ENCODE measurements at regions of chr1 and their contacts with region 1.

Region 1: GRCh38 chr1:111399792-111400610 is 27.5 kb downstream of the OVGP1 start:
- H3K4me3 ChIP-seq: no peak overlapping the region
- H3K27ac ChIP-seq: no peak overlapping the region
- H3K4me1 ChIP-seq: no peaks in the 10 kb centered on the region
- CTCF ChIP-seq: no peak

Region 2: DNA sequence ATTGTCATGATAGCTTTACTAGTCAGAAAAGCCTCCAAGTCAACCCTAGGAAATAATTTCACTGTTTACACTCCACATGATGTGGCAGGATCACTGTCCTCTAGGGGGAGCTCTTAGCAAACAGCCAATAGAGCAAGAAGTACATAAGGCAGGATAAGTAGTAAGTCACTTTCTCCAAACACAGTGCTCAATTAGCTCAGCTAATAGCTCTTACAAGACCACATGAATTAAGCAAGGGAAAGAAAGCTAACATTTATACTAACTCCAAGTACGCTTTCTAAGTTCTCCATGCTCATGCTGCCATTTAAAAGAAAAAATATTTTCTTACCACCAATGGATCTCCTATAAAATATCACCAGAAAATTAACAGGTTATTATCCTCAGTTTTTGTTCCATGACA is 369.4 kb before region 1 on chr1:
- CTCF ChIA-PET with region 1: interaction called, 10 read pairs
- POLR2A ChIA-PET with region 1: no interaction called
- H3K4me3 ChIP-seq: no peak overlapping the region
- H3K27ac ChIP-seq: no peak overlapping the region
- H3K4me1 ChIP-seq: no peaks in the 10 kb centered on the region
- CTCF ChIP-seq: no peak

Region 3: DNA sequence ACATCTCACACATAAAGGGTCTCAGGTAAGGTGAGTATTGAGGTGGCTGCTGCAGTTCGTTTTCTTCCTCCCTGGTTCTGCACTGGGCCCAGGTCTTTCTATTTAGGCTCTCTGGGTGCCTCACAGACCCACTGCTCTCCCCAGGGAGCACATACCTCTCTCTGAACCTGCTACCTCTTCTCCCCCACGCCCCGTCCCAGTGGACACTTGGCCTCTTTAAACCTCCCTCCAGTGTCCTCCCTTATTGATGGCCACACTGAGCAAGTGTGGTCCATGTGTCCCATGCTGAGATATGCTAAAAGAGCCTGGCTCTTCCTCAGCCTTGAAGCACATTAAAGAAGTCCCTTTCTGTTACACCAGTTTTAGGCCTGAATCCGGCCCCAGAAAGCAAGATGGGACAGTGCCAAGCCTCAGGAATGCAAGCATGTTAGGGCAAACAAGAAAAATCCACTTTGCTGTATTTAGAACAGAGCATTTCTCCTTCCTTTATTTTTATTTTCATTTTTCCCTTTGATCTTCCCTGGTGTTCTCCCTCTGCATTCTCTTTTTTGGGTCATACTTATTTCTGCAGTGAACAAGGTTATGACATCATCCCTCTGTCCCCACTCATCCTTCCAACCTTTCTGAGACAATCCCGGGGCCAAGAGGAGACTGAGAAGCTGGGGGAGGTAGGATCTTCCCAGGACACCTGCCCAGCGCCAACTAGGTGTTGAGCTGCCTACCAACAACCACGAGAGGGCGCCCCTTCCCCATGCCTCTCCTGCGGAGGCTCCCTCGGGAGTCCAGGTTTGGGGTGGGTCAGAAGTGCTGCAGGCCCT is 177.5 kb before region 1 on chr1:
- CTCF ChIA-PET with region 1: interaction called, 115 read pairs
- POLR2A ChIA-PET with region 1: no interaction called
- H3K4me3 ChIP-seq: no peak overlapping the region
- H3K27ac ChIP-seq: no peak overlapping the region
- H3K4me1 ChIP-seq: no peaks in the 10 kb centered on the region
- CTCF ChIP-seq: peak; percentile 81

Region 4: GRCh38 chr1:111381457-111381856 is 18.5 kb before region 1 on chr1:
- CTCF ChIA-PET with region 1: interaction called, 16 read pairs
- POLR2A ChIA-PET with region 1: no interaction called
- H3K4me3 ChIP-seq: no peak overlapping the region
- H3K27ac ChIP-seq: no peak overlapping the region
- H3K4me1 ChIP-seq: no peaks in the 10 kb centered on the region
- CTCF ChIP-seq: no peak

Region 5: DNA sequence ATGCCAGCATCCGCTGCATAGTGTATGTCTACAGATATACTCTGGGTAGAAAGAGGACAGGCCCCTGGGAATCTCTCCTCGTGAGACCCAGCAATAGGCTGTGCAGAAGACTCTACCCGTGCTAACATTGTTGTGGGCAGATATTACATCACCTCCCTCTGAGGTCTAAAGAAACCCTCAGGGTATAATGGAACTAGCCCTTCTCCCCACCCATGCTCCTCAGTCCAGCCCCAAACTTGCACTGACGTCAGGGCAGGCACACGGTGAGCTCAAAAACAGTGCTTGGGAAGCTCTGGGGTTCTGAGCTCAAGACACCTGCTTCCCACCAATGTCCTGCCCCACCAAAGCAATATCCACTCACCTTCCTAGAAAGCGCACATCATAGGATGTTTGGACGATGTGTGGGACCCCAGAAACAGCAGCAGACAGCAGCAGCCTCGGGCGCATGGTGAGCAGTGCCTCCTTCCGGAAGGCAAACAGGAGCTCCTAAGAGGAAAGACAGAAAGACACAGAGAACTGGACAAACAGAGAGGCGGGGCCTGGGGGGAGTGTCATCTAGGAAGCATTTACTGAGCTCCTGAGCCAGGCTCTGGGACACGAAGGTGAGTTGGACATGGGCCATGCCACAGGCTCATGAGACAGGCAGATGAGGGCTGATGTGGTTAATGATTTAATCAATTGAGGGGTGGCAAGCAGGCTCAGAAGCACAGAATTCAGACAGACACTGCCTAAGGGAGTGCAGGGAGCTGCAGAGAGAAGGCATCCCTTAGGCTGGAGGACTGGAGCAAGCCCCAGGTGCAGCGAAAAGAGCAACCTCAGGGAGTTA is 22.8 kb after region 1 on chr1:
- CTCF ChIA-PET with region 1: interaction called, 11 read pairs
- POLR2A ChIA-PET with region 1: no interaction called
- H3K4me3 ChIP-seq: peak overlapping the region; percentile 36
- H3K27ac ChIP-seq: no peak overlapping the region
- H3K4me1 ChIP-seq: peaks cover 3% of the 10 kb centered on the region; the same call in 1 of the 2 replicates
- CTCF ChIP-seq: no peak

Region 6: DNA sequence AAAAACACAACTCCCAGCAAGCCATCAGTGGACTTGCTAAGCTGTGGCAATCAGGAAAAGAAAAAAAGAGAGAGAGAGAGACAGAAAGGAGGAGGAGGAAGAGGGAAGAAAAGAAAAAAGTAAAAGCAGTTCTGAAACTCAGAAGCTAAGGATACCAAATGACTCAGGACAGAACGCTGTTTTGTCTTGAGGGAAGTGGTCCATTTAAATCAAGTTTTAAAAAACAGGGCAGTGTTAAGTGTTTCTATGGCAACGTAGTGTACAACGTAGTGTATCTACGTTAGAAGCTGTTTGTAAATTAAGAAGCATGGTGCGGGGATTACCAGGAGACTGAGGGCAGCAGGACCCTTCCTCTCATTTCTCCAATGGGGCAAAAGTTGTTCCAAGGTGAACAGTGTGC is 97.6 kb after region 1 on chr1:
- CTCF ChIA-PET with region 1: no interaction called
- POLR2A ChIA-PET with region 1: no interaction called
- H3K4me3 ChIP-seq: no peak overlapping the region
- H3K27ac ChIP-seq: no peak overlapping the region
- H3K4me1 ChIP-seq: no peaks in the 10 kb centered on the region
- CTCF ChIP-seq: no peak